Esophagus squamous epithelium (tissue), 5 donors: ENCODE measurements at regions of chr4 and their contacts with region 1.

Region 1: DNA sequence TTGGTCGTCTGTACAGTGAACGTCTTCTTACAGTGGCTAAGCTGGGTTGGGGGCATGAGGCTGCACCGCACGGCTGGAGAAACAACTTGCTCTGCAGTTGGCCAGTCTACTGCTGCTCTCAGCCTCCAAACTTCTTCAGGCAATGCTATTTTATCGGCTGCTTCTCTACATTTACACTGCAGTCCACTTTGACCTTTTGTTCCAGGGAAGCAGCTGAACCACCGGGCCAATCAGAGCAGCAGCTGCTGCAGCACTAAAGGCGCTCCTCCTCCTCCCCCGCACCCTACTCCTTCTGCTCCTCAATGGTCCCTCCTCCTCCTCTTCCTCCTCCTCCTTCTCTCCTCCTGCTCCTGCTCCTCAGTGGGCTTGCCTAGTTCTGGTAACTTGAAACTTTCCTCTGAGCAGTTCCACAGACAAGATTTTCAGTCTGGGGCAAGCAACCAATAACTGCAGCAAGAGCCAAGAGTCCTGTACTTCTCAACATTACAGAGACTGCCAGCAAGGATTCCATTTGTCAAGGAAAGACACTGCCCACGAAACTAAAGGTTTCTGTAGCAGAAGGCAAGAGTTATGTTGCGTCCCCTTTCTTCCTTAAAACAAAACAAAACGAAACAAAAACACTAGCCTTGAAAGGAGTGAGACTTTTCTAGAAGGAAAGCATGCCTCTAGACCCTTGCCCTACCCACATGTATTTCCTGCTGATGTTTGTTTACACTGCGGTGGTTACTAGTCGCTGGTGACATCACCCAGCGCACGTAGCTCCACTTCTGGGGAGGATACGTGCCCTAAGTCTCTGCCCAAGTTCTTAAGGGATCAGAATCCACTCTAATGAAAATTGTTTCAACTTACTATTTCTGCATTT is 125.7 kb upstream of the NAP1L5 start:
- DNase-seq: peak; percentile 24
- H3K4me3 ChIP-seq: peak overlapping the region; percentile 31 to 70 (median 51)
- H3K27ac ChIP-seq: peak overlapping the region; percentile 76 to 90 (median 82)
- H3K4me1 ChIP-seq: peaks cover 0 to 55% (median 7%) of the 10 kb centered on the region in 3 donors
- H3K27me3 ChIP-seq: no peaks in the 10 kb centered on the region
- CTCF ChIP-seq: no peak
- POLR2A ChIP-seq: peak in 2 of 4 donors; percentile 54 to 65

Region 2: DNA sequence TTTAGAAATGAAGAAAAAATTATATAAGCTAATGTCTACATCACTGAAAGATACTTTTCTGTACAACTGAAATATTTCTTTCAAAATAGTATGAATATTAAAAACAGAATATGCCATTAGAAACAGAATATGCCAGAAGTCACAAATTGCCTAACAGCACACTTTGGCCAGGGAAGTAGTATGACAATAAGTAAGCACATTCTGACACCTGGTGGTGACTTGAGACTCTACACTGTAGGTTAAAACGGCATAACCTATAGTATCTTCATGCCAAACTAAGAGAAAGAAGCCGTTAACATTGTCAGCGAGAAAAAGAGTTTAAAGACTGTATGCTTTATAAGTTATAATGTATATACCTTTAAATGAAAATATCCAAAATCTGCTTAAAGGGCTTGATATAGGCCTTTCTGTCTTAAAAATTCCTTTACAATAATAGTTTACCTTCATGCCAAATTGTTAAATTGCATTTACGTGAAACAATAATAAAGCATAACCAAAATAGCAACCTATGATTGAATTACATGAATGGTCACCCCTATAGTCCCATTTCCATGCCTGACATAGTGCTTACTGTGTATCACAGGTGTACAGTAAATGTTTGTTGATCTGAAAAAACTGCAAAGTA is 200.9 kb after region 1 on chr4:
- intact Hi-C with region 1: loop called (anchors 5 kb)
- DNase-seq: no peak
- H3K4me3 ChIP-seq: no peak overlapping the region
- H3K27ac ChIP-seq: no peak overlapping the region
- H3K4me1 ChIP-seq: peaks cover 0 to 3% (median 0%) of the 10 kb centered on the region in 3 donors
- H3K27me3 ChIP-seq: no peaks in the 10 kb centered on the region
- CTCF ChIP-seq: peak; percentile 81 to 94 (median 88)
- POLR2A ChIP-seq: no peak

Region 3: GRCh38 chr4:89110986-89111832 is 287.9 kb after region 1 on chr4 and contains the start of gene TIGD2:
- intact Hi-C with region 1: loop called (anchors 5 kb)
- DNase-seq: peak; percentile 37
- H3K4me3 ChIP-seq: peak within 1 kb of the TSS; percentile 72 to 98 (median 86)
- H3K27ac ChIP-seq: peak within 1 kb of the TSS; percentile 84 to 93 (median 90)
- H3K4me1 ChIP-seq: peaks cover 0 to 23% (median 14%) of the 10 kb centered on the region in 3 donors
- H3K27me3 ChIP-seq: peaks cover 0 to 11% (median 0%) of the 10 kb centered on the region in 4 donors
- CTCF ChIP-seq: peak; percentile 75 to 92 (median 82)
- POLR2A ChIP-seq: peak in 2 of 4 donors; percentile 71 to 77
- total RNA-seq, gene TIGD2: 1.2 to 8.5 (median 5.8) TPM